Activated B cell treated with CpG ODN at 0.5 μM for 24 hours (primary cell): ENCODE measurements at regions of chr17 and their contacts with region 1.

Region 1: GRCh38 chr17:18363101-18364049 is at the start of gene SHMT1:
- DNase-seq: peak; percentile 86
- ATAC-seq: peak; percentile 100
- H3K4me3 Mint-ChIP-seq: peak within 1 kb of the TSS; percentile 92
- H3K27ac Mint-ChIP-seq: peak within 1 kb of the TSS; percentile 71
- H3K4me1 Mint-ChIP-seq: peaks cover 17% of the 10 kb centered on the region
- H3K27me3 Mint-ChIP-seq: no peaks in the 10 kb centered on the region
- CTCF ChIP-seq: no peak
- total RNA-seq, gene SHMT1: 17.9 and 18.4 TPM in 2 replicates

Region 2: GRCh38 chr17:18248300-18248731 is 115.1 kb before region 1 on chr17:
- CTCF ChIA-PET with region 1: no interaction called
- POLR2A ChIA-PET with region 1: no interaction called
- intact Hi-C with region 1: loop called (anchors 5 kb)
- DNase-seq: peak; percentile 47
- ATAC-seq: peak; percentile 82
- H3K4me3 Mint-ChIP-seq: no peak overlapping the region
- H3K27ac Mint-ChIP-seq: no peak overlapping the region
- H3K4me1 Mint-ChIP-seq: peaks cover 6% of the 10 kb centered on the region
- H3K27me3 Mint-ChIP-seq: no peaks in the 10 kb centered on the region
- CTCF ChIP-seq: no peak

Region 3: GRCh38 chr17:18326039-18326438 is 37.3 kb before region 1 on chr17:
- CTCF ChIA-PET with region 1: no interaction called
- POLR2A ChIA-PET with region 1: no interaction called
- intact Hi-C with region 1: no loop called
- DNase-seq: no peak
- ATAC-seq: no peak
- H3K4me3 Mint-ChIP-seq: no peak overlapping the region
- H3K27ac Mint-ChIP-seq: peak overlapping the region; percentile 75
- H3K4me1 Mint-ChIP-seq: peaks cover 31% of the 10 kb centered on the region
- H3K27me3 Mint-ChIP-seq: no peaks in the 10 kb centered on the region
- CTCF ChIP-seq: no peak

Region 4: GRCh38 chr17:18339933-18340332 is 23.4 kb before region 1 on chr17:
- CTCF ChIA-PET with region 1: no interaction called
- POLR2A ChIA-PET with region 1: no interaction called
- intact Hi-C with region 1: no loop called
- DNase-seq: no peak
- ATAC-seq: no peak
- H3K4me3 Mint-ChIP-seq: no peak overlapping the region
- H3K27ac Mint-ChIP-seq: no peak overlapping the region
- H3K4me1 Mint-ChIP-seq: no peaks in the 10 kb centered on the region
- H3K27me3 Mint-ChIP-seq: no peaks in the 10 kb centered on the region
- CTCF ChIP-seq: no peak